ENCODE measurements at regions of chr15 and their contacts with region 1.

Region 1: GRCh38 chr15:68672781-68673205 is 94.0 kb downstream of the CORO2B start:
- DNase-seq: no peak
- H3K4me3 Mint-ChIP-seq: no peak overlapping the region
- H3K27ac Mint-ChIP-seq: no peak overlapping the region
- H3K4me1 Mint-ChIP-seq: no peaks in the 10 kb centered on the region
- H3K27me3 Mint-ChIP-seq: peaks cover 14% of the 10 kb centered on the region

Region 2: DNA sequence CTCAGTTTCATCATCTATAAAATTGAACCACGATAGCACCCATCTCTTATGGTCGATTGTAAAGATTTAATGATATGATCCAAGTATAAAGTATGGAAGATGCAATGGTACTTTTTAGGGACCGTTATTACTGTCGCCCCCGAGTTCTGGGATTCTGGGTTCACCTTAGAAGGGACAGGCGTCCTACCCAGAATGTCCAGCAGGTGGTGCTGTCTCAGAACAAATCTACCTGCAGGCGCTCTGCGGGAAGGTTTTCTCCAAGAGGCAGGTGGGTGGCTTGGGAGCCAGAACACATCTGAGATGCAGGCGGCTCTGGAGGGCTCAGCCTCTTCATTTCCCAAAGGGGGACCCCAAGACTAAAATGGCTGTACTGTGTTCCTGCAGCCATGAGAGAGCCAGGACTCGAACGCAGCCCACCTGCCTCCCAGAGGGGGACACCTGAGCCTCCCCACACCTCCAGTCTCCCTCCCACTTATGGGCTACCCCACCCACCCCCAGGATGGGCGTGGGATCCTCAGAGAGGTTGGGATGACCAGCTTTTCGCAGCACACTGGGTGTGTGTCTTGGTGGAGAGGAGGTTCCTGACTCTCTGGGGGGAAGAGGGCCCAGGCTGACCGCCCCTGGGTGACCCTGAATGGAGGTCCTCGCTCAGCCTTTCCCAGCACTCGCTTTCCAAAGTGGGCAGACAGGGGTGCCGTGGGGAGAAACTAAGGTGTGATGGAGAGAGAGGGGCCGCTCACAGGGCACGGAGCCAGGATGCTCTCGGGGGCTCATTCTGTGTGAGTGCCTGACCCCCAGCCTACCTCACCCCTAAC is 122.1 kb before region 1 on chr15:
- CTCF ChIA-PET with region 1: interaction called, 33 read pairs
- POLR2A ChIA-PET with region 1: no interaction called
- DNase-seq: peak; percentile 75
- H3K4me3 Mint-ChIP-seq: no peak overlapping the region
- H3K27ac Mint-ChIP-seq: no peak overlapping the region
- H3K4me1 Mint-ChIP-seq: peaks cover 8% of the 10 kb centered on the region
- H3K27me3 Mint-ChIP-seq: peaks cover 47% of the 10 kb centered on the region

Region 3: GRCh38 chr15:68640791-68641331 is 31.9 kb before region 1 on chr15:
- CTCF ChIA-PET with region 1: no interaction called
- POLR2A ChIA-PET with region 1: no interaction called
- DNase-seq: no peak
- H3K4me3 Mint-ChIP-seq: no peak overlapping the region
- H3K27ac Mint-ChIP-seq: no peak overlapping the region
- H3K4me1 Mint-ChIP-seq: no peaks in the 10 kb centered on the region
- H3K27me3 Mint-ChIP-seq: no peaks in the 10 kb centered on the region

Region 4: GRCh38 chr15:68650901-68651709 is 21.7 kb before region 1 on chr15:
- CTCF ChIA-PET with region 1: interaction called, 37 read pairs
- POLR2A ChIA-PET with region 1: no interaction called
- DNase-seq: peak; percentile 53
- H3K4me3 Mint-ChIP-seq: no peak overlapping the region
- H3K27ac Mint-ChIP-seq: no peak overlapping the region
- H3K4me1 Mint-ChIP-seq: no peaks in the 10 kb centered on the region
- H3K27me3 Mint-ChIP-seq: peaks cover 7% of the 10 kb centered on the region

Region 5: GRCh38 chr15:68875377-68876116 is 202.8 kb after region 1 on chr15:
- CTCF ChIA-PET with region 1: interaction called, 29 read pairs
- POLR2A ChIA-PET with region 1: no interaction called
- DNase-seq: peak; percentile 90
- H3K4me3 Mint-ChIP-seq: no peak overlapping the region
- H3K27ac Mint-ChIP-seq: no peak overlapping the region
- H3K4me1 Mint-ChIP-seq: peaks cover 4% of the 10 kb centered on the region
- H3K27me3 Mint-ChIP-seq: peaks cover 34% of the 10 kb centered on the region

Measured in activated CD4-positive, alpha-beta memory T cell treated with anti-CD3 and anti-CD28 coated beads, Interleukin-2, amount 10 ng/mL, durations not matched to agents 7 days and 5 days (primary cell).